Natural killer cell (primary cell): ENCODE measurements at regions of chr17 and their contacts with region 1.

Region 1: DNA sequence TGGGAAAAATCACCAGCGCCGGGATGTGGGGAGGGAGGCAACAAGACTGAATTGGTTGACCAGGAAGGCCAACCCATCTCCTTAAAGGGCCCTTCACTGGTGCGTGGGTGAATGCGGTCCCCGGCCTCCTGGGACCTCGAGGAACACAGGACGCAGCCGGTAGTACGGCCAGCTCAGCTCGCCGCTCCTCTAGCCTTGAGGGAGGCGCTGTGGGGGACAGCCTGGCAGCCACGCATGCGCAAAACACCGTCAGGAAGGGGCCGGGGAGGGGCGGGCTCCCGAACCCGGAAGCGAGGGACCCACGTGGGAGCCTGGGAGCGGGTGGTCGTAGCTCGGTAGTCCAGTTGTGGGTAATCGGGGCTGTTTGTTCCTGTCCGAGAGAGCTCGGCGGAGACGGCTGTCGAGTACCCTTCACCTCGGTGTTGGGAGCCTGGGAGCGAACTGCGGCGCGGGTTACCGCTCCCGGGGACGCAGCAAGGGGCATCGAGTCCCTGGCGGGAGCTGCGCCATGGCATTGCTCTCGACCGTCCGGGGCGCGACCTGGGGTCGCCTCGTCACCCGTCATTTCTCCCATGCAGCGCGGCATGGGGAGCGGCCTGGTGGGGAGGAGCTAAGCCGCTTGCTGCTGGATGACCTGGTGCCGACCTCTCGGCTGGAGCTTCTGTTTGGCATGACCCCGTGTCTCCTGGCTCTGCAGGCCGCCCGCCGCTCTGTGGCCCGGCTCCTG is at the start of gene MRM1:
- DNase-seq: peak; percentile 84 to 95
- ATAC-seq: peak; percentile 87 to 91 (median 91)
- H3K4me3 ChIP-seq: peak within 1 kb of the TSS; percentile 96
- H3K4me3 Mint-ChIP-seq: peak within 1 kb of the TSS; percentile 92
- H3K27ac ChIP-seq: peak within 1 kb of the TSS; percentile 73
- H3K27ac Mint-ChIP-seq: peak within 1 kb of the TSS; percentile 84 to 93
- H3K4me1 ChIP-seq: peaks cover 28% of the 10 kb centered on the region
- H3K4me1 Mint-ChIP-seq: peaks cover 36 to 41% of the 10 kb centered on the region in 2 donors
- H3K27me3 ChIP-seq: no peaks in the 10 kb centered on the region
- H3K27me3 Mint-ChIP-seq: no peaks in the 10 kb centered on the region
- CTCF ChIP-seq: peak; percentile 16
- total RNA-seq, gene MRM1: 1.3 to 2.8 (median 1.7) TPM

Region 2: GRCh38 chr17:36545465-36546417 is 55.7 kb before region 1 on chr17:
- intact Hi-C with region 1: loop called (anchors 10 kb)
- DNase-seq: peak; percentile 96 to 98
- ATAC-seq: peak; percentile 65 to 87 (median 75)
- H3K4me3 ChIP-seq: peak overlapping the region; percentile 89
- H3K4me3 Mint-ChIP-seq: peak overlapping the region; percentile 88
- H3K27ac ChIP-seq: peak overlapping the region; percentile 100
- H3K27ac Mint-ChIP-seq: peak overlapping the region; percentile 98 to 99
- H3K4me1 ChIP-seq: peaks cover 30% of the 10 kb centered on the region
- H3K4me1 Mint-ChIP-seq: peaks cover 35 to 42% of the 10 kb centered on the region in 2 donors
- H3K27me3 ChIP-seq: no peaks in the 10 kb centered on the region
- H3K27me3 Mint-ChIP-seq: no peaks in the 10 kb centered on the region
- CTCF ChIP-seq: no peak

Region 3: DNA sequence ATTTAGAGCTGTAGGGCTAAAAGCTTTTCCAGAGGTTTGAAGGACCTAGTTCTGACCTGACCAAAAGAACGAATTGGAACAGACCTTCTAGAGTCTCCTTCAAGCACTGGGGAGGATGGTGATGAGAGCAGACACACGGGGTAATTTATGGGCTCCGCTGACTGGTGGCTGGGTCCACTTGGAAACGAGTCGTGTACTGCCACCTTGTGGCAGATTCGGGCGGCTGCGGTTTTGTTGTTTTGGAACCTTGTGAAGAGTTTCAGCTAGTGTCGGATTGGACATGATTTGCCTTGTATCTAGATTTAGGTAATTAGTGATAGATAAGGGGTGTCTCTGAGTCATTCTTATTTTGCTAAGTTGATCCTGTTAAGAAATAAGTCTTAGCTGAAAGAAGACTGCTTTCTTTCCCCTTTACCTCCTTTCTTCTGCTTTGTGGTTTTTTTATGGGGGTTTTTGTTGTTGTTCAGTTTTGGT is 446.2 kb after region 1 on chr17:
- intact Hi-C with region 1: loop called (anchors 2 kb)
- DNase-seq: peak; percentile 66 to 87
- ATAC-seq: peak; percentile 86 to 96 (median 93)
- H3K4me3 ChIP-seq: no peak overlapping the region
- H3K4me3 Mint-ChIP-seq: peak overlapping the region; percentile 1
- H3K27ac ChIP-seq: no peak overlapping the region
- H3K27ac Mint-ChIP-seq: peak overlapping the region; percentile 69 to 83
- H3K4me1 ChIP-seq: peaks cover 4% of the 10 kb centered on the region
- H3K4me1 Mint-ChIP-seq: peaks cover 14 to 15% of the 10 kb centered on the region in 2 donors
- H3K27me3 ChIP-seq: no peaks in the 10 kb centered on the region
- H3K27me3 Mint-ChIP-seq: no peaks in the 10 kb centered on the region
- CTCF ChIP-seq: peak; percentile 81

Region 4: DNA sequence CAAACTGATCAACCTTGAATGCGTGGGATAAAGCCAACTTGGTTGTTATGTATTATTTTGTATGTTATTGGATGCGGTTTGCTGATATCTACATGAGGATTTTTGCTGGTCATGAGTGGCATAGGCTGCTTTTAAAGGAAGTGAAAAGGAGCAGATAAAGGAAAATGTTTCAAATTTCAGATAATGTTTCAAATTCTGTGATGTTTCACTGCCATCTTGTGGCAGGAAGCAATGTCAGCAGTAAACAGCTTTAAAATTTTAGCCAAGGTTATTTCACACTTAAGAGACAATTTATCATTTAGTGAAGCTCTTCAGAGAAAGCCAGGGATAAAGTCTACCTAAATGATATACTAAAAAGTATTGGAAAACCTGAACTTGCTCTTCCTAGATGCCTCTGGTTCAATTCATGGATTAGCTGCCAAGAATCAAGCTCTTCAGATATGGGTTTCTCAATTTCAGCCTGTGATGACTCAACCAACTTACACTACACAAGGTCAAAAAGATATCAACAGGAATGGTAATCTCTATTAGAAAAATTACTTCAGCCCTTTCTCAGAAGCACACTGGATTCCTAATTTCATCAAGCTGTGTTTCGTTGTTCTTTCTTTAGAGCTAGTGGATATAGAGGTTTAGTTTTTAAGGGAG is 638.3 kb after region 1 on chr17:
- intact Hi-C with region 1: loop called (anchors 5 kb)
- DNase-seq: peak in 1 of 2 donors; percentile 54
- ATAC-seq: no peak
- H3K4me3 ChIP-seq: no peak overlapping the region
- H3K4me3 Mint-ChIP-seq: no peak overlapping the region
- H3K27ac ChIP-seq: no peak overlapping the region
- H3K27ac Mint-ChIP-seq: no peak overlapping the region
- H3K4me1 ChIP-seq: no peaks in the 10 kb centered on the region
- H3K4me1 Mint-ChIP-seq: no peaks in the 10 kb centered on the region
- H3K27me3 ChIP-seq: no peaks in the 10 kb centered on the region
- H3K27me3 Mint-ChIP-seq: no peaks in the 10 kb centered on the region
- CTCF ChIP-seq: peak; percentile 61

Region 5: DNA sequence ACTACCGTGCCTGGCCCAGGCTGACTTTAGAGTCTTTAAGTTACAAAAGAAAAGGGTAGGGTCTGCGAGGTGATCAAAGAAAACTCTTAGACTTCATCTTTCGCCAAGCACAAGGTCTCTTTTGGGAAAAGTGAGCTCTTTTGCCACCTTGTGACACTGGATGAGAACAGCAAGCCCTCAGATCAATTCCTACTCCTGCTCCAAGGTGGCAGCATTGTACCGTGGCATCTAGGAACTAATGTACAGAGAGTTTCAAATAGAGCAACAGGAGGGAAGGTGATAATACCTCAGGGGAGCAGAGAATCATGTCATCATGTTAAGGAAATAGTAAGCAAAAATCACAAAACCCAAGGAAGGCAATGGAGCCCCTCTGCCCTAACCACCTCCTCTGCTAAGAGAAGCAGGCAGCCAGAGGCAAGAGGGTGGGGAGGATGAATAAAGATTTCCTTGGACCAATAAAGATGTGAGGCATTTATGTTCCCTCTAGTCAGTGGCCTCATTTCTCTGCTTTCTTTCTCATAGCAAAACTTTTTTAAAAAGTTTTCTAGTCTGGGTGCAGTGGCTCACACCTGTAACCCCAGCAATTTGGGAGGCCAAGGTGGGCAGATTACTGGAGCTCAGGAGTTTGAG is 772.2 kb after region 1 on chr17:
- intact Hi-C with region 1: loop called (anchors 2 kb)
- DNase-seq: peak; percentile 29 to 84
- ATAC-seq: peak; percentile 76 to 99 (median 98)
- H3K4me3 ChIP-seq: no peak overlapping the region
- H3K4me3 Mint-ChIP-seq: no peak overlapping the region
- H3K27ac ChIP-seq: no peak overlapping the region
- H3K27ac Mint-ChIP-seq: no peak overlapping the region
- H3K4me1 ChIP-seq: no peaks in the 10 kb centered on the region
- H3K4me1 Mint-ChIP-seq: peaks cover 0 to 7% of the 10 kb centered on the region in 2 donors
- H3K27me3 ChIP-seq: no peaks in the 10 kb centered on the region
- H3K27me3 Mint-ChIP-seq: no peaks in the 10 kb centered on the region
- CTCF ChIP-seq: peak; percentile 76